Naive thymus-derived CD4-positive, alpha-beta T cell (primary cell): ENCODE measurements at regions of chr11 and their contacts with region 1.

Region 1: DNA sequence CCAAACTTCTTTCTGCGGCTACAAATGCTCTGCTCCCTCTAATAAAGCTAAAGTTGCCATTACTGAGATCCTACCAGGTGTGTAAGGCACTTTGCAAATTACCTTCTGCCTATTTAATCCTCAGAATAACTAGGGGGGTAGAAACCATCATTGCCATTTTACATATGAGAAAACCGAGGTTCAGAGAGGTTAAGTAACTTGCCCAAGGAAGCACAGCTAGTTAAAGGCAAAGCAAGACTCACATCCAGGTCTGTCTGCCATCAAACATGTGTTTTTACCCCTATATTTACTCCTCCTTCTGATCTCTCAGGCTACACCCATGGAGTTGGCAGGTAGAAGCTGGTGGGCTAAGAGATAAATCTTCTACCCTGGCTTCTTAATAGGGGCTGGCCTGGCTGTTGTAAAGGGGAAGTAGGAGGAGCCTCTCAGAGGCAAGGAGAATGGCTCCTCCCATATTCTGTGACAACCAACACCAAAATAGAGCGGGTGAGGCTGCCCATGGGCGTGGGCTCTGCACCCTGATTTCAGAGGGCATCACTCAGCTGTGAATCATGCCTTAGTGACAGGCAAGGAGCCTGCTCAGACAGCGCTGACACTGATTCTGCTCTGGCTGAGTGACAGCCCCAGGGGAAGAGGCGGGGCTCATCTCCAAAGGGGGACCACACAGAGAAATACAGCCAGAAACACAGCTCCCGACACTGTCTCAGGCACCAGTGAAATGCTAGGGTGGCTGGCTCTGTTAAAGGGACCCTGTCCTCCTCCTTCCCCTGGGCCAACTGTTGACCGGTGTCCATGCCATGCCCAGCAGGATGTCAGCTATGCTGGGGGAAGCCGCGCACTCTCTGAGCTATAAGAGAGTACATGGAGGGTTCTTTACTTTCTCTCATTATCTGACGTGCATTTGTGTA is 106.8 kb downstream of the ABTB2 start:
- DNase-seq: peak; percentile 24 to 79 (median 58)
- ATAC-seq: peak; percentile 94
- H3K4me3 ChIP-seq: peak overlapping the region; percentile 40
- H3K4me3 Mint-ChIP-seq: peak overlapping the region; percentile 35 to 85 (median 78)
- H3K27ac ChIP-seq: no peak overlapping the region
- H3K27ac Mint-ChIP-seq: peak overlapping the region; percentile 12 to 79 (median 55)
- H3K4me1 ChIP-seq: peaks cover 36 to 51% of the 10 kb centered on the region in 2 donors
- H3K4me1 Mint-ChIP-seq: peaks cover 36 to 67% (median 58%) of the 10 kb centered on the region in 7 donors
- H3K27me3 ChIP-seq: no peaks in the 10 kb centered on the region
- H3K27me3 Mint-ChIP-seq: peaks cover 0 to 20% (median 0%) of the 10 kb centered on the region in 5 donors

Region 2: DNA sequence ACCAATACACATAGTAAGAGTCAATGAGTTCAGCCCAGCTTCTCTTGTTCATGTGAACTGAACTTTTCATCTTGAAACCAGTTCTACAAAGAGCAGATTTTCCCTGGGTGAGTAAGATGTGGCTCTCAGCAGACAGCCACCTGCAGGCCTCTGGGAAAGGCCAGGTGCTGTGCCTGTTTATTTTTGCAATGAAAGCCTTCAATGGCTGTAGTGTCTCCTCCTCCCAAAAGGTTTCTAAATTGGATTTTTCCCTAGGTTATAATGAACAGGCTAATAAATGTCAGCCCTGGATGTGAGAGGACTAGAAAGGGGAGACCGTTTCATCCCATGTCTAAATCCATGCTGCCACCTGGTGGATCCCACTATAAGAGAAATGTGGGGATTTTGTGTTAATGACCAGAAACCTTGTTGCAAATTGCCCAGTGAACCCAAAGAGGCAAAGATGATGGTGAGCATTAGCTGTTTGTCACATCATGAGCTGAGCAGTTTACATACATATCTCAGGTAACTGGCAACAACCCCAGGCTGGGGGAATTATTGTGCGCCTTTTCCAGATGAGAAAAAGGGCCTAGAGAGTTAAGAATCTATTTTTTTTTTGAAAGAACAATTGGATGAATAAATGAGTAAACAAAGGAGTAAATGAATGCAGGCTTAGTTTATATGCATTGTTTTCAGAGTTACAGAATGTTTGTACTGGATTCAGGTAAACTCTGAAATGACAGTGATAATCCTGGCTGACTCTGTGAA is 563.1 kb before region 1 on chr11:
- CTCF ChIA-PET with region 1: no interaction called
- POLR2A ChIA-PET with region 1: no interaction called
- intact Hi-C with region 1: no loop called
- DNase-seq: no peak
- ATAC-seq: no peak
- H3K4me3 ChIP-seq: no peak overlapping the region
- H3K4me3 Mint-ChIP-seq: no peak overlapping the region
- H3K27ac ChIP-seq: no peak overlapping the region
- H3K27ac Mint-ChIP-seq: no peak overlapping the region
- H3K4me1 ChIP-seq: no peaks in the 10 kb centered on the region
- H3K4me1 Mint-ChIP-seq: peaks cover 0 to 3% (median 0%) of the 10 kb centered on the region in 7 donors
- H3K27me3 ChIP-seq: peaks cover 0 to 4% of the 10 kb centered on the region in 2 donors
- H3K27me3 Mint-ChIP-seq: peaks cover 11 to 29% (median 16%) of the 10 kb centered on the region in 5 donors

Region 3: DNA sequence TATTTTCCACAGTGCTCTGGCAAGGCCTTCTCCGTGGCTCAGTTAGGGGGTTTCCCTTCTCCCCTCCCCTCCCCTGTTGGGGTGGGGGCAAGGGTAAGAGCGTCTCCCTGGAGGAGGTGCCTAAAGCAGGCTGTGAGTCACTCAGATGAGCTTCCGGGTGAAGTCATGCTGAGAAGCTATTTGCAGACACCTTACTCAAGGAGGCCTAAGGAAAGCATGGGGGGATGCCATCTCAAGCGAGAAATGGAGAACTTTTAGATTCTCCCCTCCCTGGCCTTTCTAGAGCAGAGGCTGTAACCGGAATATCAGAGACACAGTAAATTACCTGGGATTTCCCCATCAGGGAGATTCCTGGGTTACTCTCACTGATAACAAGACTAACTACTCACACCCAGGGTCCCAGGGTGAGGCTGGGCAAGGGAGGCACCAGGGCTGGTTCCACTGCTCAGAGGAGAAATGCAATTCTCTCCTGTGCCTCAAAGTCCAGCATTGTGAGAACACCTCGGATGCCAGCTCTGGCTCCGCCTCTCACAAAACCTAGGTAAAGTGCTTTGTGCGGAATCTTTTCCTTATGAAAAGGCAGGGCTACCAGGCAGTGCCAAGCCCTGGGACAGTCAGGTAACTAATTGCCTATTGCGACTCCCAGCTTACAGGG is 16.8 kb before region 1 on chr11:
- CTCF ChIA-PET with region 1: interaction called, 5 read pairs
- POLR2A ChIA-PET with region 1: interaction called, 6 read pairs
- intact Hi-C with region 1: loop called (anchors 1 kb)
- DNase-seq: peak in 8 of 9 donors; percentile 50 to 89 (median 62)
- ATAC-seq: no peak
- H3K4me3 ChIP-seq: peak overlapping the region; percentile 16
- H3K4me3 Mint-ChIP-seq: peak overlapping the region in 5 of 10 donors; percentile 35 to 69 (median 47)
- H3K27ac ChIP-seq: peak overlapping the region; percentile 39
- H3K27ac Mint-ChIP-seq: peak overlapping the region in 7 of 9 donors; percentile 12 to 74 (median 65)
- H3K4me1 ChIP-seq: peaks cover 8 to 18% of the 10 kb centered on the region in 2 donors
- H3K4me1 Mint-ChIP-seq: peaks cover 0 to 34% (median 13%) of the 10 kb centered on the region in 7 donors
- H3K27me3 ChIP-seq: no peaks in the 10 kb centered on the region
- H3K27me3 Mint-ChIP-seq: peaks cover 0 to 7% (median 0%) of the 10 kb centered on the region in 5 donors

Region 4: GRCh38 chr11:34267011-34267410 is 16.0 kb after region 1 on chr11:
- CTCF ChIA-PET with region 1: no interaction called
- POLR2A ChIA-PET with region 1: interaction called, 3 read pairs
- intact Hi-C with region 1: loop called in 1 of 2 experiments (anchors 1 kb)
- DNase-seq: no peak
- ATAC-seq: no peak
- H3K4me3 ChIP-seq: no peak overlapping the region
- H3K4me3 Mint-ChIP-seq: peak overlapping the region in 3 of 10 donors; percentile 44 to 73 (median 50)
- H3K27ac ChIP-seq: no peak overlapping the region
- H3K27ac Mint-ChIP-seq: peak overlapping the region in 1 of 9 donors; percentile 49
- H3K4me1 ChIP-seq: peaks cover 0 to 8% of the 10 kb centered on the region in 2 donors
- H3K4me1 Mint-ChIP-seq: peaks cover 7 to 21% (median 15%) of the 10 kb centered on the region in 7 donors
- H3K27me3 ChIP-seq: no peaks in the 10 kb centered on the region
- H3K27me3 Mint-ChIP-seq: peaks cover 0 to 12% (median 0%) of the 10 kb centered on the region in 5 donors

Region 5: DNA sequence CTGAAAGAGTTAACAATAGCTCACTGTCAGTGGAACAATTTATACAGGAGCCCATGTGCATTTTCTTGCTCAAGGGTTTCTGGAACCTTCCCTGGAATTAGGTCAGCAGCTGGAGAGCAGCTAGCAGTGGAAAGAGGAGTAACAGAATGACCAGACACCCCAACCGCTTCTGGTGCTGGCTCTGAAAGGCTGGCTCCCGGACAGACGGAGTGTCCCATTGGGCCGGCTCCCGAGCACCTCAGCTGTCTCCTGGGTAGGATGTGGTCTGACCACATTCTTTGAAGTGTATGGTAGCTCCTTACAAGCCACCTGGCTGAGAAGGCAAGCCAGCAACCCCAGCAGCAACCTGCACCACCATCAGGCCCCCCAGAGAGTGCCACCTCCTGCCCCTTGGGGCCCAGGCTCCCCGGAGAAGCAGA is 62.1 kb after region 1 on chr11:
- CTCF ChIA-PET with region 1: no interaction called
- POLR2A ChIA-PET with region 1: no interaction called
- intact Hi-C with region 1: loop called in 1 of 2 experiments (anchors 5 kb)
- DNase-seq: peak in 6 of 9 donors; percentile 19 to 49 (median 28)
- ATAC-seq: no peak
- H3K4me3 ChIP-seq: no peak overlapping the region
- H3K4me3 Mint-ChIP-seq: peak overlapping the region in 4 of 10 donors; percentile 9 to 56 (median 38)
- H3K27ac ChIP-seq: no peak overlapping the region
- H3K27ac Mint-ChIP-seq: no peak overlapping the region
- H3K4me1 ChIP-seq: peaks cover 0 to 14% of the 10 kb centered on the region in 2 donors
- H3K4me1 Mint-ChIP-seq: peaks cover 14 to 43% (median 34%) of the 10 kb centered on the region in 7 donors
- H3K27me3 ChIP-seq: no peaks in the 10 kb centered on the region
- H3K27me3 Mint-ChIP-seq: peaks cover 0 to 8% (median 0%) of the 10 kb centered on the region in 5 donors

Region 6: DNA sequence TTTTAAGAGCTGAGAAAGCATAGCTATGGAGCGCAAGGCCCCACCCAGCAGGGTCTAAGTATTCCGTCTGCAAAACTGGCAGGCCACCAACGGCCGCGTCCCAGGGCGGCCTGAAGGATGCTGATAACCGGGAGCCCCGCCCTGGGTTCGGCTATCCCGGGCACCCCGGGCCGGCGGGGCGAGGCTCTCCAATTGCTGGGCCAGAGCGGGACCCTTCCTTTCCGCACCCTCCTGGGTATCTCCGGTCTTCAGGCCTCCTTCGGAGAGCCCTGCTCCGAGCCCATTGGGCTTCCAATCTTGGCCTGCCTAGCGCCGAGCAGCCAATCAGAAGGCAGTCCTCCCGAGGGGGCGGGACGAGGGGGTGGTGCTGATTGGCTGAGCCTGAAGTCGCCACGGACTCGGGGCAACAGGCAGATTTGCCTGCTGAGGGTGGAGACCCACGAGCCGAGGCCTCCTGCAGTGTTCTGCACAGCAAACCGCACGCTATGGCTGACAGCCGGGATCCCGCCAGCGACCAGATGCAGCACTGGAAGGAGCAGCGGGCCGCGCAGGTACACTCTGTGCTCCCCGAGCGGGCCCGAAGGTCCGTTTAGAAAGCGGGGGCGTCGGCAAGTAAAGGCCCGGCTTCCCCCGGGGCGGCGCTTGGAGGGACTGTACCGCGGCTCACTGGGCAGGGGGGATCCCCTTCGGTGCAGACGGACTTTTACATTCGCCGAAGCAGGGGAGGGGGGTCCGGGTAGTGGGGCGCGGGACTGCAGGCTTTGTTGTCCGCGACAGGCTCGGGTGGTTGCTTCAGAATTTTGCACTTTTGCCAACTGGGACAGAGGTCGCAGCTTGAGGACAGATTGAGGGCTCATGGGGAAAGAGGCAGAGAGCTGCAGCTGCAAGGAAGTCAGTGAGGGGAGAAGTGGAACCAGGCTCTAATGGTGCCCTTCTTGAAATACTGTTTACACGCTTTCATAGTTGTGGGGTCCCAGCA is 187.8 kb after region 1 on chr11 and contains the start of gene CAT:
- CTCF ChIA-PET with region 1: no interaction called
- POLR2A ChIA-PET with region 1: no interaction called
- intact Hi-C with region 1: loop called in 1 of 2 experiments (anchors 2 kb)
- DNase-seq: peak; percentile 94 to 98 (median 97)
- ATAC-seq: peak; percentile 98
- H3K4me3 ChIP-seq: peak within 1 kb of the TSS; percentile 90
- H3K4me3 Mint-ChIP-seq: peak within 1 kb of the TSS; percentile 88 to 98 (median 96)
- H3K27ac ChIP-seq: peak within 1 kb of the TSS; percentile 79
- H3K27ac Mint-ChIP-seq: peak within 1 kb of the TSS; percentile 89 to 97 (median 93)
- H3K4me1 ChIP-seq: peaks cover 7 to 19% of the 10 kb centered on the region in 2 donors
- H3K4me1 Mint-ChIP-seq: peaks cover 21 to 47% (median 35%) of the 10 kb centered on the region in 7 donors
- H3K27me3 ChIP-seq: no peaks in the 10 kb centered on the region
- H3K27me3 Mint-ChIP-seq: no peaks in the 10 kb centered on the region
- total RNA-seq, gene CAT: 23.3 to 55.9 (median 42.6) TPM